HAP-1 (cell line): ENCODE measurements at regions of chr5 and their contacts with region 1.

Region 1: GRCh38 chr5:1666812-1667588 is 132.6 kb downstream of the MRPL36 start:
- DNase-seq: peak; percentile 29 to 86
- H3K4me3 ChIP-seq: peak overlapping the region; percentile 26
- H3K4me1 ChIP-seq: no peaks in the 10 kb centered on the region; the same call in 1 of the 2 replicates
- H3K27me3 ChIP-seq: peaks cover 5% of the 10 kb centered on the region; the same call in 1 of the 2 replicates

Region 2: DNA sequence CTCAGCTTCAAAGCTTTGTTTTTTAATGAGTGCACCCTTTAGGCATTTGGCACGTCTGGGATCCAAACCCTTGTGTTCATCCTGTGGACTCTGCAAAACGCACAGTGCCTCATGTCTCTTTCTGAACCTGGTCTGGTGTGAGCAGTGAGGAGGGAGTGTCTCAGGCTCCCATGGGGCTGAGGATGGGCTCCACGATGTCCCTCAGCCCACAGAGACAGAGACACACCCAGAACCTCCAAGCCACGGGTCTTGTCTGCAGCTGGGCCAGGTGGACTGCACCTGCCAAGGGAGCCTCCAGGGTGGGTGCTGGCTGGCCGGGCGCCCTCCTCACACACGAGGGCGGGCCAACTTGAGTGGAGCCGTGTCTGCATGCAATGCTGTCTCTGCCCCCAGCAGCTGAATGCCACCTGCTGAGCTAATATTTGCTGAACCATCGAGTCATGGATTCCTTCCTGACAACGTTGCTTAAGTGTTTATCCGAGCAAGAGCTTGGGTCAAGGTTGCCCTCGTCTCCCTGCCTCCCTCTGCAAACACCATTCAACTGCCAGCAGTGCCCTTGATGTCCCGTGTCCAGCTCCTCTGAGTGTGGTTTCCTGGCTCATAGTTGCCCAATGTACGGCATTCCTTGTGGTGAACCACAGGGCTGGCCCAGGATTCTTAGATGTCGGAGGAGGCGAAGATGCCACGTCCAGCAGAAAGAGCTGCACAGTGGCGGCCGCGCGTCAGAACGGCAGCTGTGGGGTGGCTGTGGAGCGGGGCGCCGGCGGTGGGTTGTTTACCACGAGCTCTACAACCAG is 111.8 kb before region 1 on chr5:
- in situ Hi-C with region 1: no loop called
- DNase-seq: no peak
- H3K4me3 ChIP-seq: no peak overlapping the region
- H3K4me1 ChIP-seq: no peaks in the 10 kb centered on the region
- H3K27me3 ChIP-seq: no peaks in the 10 kb centered on the region

Region 3: DNA sequence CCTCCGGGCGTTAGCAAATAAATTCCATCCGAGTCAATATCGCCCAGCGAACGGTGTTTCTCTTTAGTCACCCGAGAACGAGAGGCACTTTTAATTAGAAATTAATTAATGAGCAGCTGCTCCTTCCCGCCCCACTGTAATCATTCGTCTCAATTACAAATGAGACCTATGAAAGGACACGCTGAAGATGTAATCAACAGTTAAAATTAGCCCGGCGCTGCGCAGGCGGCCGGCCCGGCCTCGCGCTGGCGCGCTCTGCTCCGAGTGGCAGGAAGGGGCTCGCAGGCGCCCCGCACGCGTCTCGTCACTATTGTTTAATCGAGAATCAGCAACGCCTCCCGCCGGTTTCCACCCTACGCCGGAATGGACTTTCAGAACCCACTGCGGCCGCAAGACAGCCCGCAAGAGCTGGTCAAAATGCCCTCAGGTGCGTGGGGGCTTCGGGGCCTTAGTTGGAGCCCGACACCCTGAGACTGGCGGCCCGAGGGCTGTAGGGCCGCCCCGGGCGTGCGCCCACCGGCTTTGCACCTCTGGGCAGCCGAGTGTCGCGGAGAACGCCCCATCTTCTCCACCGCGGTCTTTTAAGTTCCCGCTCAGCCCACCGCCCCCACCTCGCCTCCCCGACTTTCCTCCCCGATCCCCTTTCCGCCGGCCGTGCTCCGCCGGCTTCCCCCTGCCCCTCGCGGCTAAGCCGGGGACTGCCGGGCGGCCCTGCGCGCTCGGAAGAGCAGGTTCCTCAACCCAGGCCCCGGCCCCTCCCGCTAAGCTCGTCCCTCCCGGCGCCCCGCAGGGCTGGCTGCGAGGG is 216.3 kb after region 1 on chr5:
- in situ Hi-C with region 1: no loop called
- DNase-seq: no peak
- H3K4me3 ChIP-seq: no peak overlapping the region
- H3K4me1 ChIP-seq: no peaks in the 10 kb centered on the region
- H3K27me3 ChIP-seq: peaks cover 30% of the 10 kb centered on the region

Region 4: DNA sequence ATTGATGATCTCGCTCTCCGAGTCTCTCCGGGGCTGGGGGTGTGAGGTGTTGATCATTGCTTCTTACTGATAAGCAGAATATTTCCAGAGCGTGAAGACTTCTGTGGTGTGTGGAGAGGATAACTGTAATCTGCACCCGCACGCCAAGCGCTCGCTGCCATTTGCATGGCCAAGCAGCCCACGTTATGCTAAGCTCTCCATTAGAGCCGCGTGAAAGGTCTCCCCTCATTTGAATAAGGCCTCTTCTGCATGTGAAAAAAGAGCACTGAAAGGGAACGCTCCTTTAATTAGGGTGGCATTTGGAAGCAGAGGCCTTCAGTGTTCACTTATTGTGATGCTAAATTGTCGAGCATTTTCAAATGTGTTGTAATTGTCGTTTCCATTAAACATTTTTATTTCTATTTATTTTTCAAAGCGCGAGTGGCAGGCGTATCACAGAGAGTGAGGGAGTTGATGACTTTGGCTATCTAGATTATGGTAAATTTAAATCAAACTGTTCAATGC is 1248.0 kb after region 1 on chr5:
- in situ Hi-C with region 1: loop called (anchors 25 kb)
- DNase-seq: peak; percentile 86 to 97
- H3K4me3 ChIP-seq: no peak overlapping the region
- H3K4me1 ChIP-seq: peaks cover 11% of the 10 kb centered on the region
- H3K27me3 ChIP-seq: no peaks in the 10 kb centered on the region